ENCODE measurements at regions of chr20 and their contacts with region 1.

Region 1: GRCh38 chr20:53773792-53774401 is 180.3 kb upstream of the ZNF217 start:
- DNase-seq: no peak
- ATAC-seq: peak; percentile 93
- H3K4me3 Mint-ChIP-seq: no peak overlapping the region
- H3K27ac Mint-ChIP-seq: peak overlapping the region; percentile 14
- H3K4me1 Mint-ChIP-seq: peaks cover 15% of the 10 kb centered on the region
- H3K27me3 Mint-ChIP-seq: no peaks in the 10 kb centered on the region

Region 2: DNA sequence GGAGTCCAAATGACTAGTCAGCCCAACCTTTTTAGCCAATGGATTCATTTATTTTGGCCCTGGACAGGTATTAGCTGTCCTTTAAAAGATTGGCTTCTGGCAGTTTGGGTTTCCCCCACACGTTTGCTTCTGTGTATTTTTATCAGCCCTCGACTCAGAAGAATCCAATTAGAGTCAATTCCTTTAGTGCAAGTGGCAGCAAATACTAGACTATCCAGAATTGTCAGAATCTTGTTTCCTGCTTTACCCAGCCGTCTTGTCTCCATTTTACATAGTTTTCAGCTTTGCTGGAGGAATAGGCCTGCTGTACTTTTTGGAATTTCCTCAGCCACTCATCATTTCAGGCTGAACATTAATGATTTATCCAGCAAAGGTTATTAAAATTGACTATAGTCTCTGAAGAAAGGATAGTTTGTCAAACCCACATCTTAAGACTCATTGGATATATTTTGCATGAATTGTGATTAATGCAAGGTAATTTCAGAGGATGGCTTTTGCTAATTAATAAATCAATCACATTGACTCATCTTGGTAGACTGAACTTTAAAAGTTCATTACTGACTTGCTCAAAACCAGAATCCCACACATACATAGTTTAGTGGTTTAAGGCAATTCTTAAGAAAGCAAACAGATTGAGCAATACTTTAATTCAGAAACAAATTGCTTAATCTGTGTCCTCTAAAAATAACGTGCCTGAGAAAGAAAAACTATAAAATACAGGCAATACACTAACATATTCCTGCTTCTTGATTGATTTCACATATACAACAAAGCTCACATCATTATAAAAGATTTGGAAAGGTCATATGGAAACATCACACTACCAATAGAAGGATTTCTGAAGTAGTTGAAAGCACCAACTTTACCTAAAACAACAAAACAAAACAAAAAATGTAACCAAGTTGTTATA is 117.3 kb before region 1 on chr20:
- CTCF ChIA-PET with region 1: no interaction called
- POLR2A ChIA-PET with region 1: no interaction called
- intact Hi-C with region 1: no loop called
- DNase-seq: no peak
- ATAC-seq: peak; percentile 38
- H3K4me3 Mint-ChIP-seq: no peak overlapping the region
- H3K27ac Mint-ChIP-seq: peak overlapping the region; percentile 73
- H3K4me1 Mint-ChIP-seq: peaks cover 80% of the 10 kb centered on the region
- H3K27me3 Mint-ChIP-seq: no peaks in the 10 kb centered on the region

Region 3: GRCh38 chr20:53809728-53810365 is 36.0 kb after region 1 on chr20:
- CTCF ChIA-PET with region 1: no interaction called
- POLR2A ChIA-PET with region 1: interaction called, 10 read pairs
- intact Hi-C with region 1: no loop called
- DNase-seq: no peak
- ATAC-seq: no peak
- H3K4me3 Mint-ChIP-seq: no peak overlapping the region
- H3K27ac Mint-ChIP-seq: no peak overlapping the region
- H3K4me1 Mint-ChIP-seq: peaks cover 4% of the 10 kb centered on the region
- H3K27me3 Mint-ChIP-seq: no peaks in the 10 kb centered on the region

Region 4: GRCh38 chr20:53857723-53858236 is 83.9 kb after region 1 on chr20:
- CTCF ChIA-PET with region 1: interaction called, 3 read pairs
- POLR2A ChIA-PET with region 1: interaction called, 17 read pairs
- intact Hi-C with region 1: no loop called
- DNase-seq: no peak
- ATAC-seq: no peak
- H3K4me3 Mint-ChIP-seq: no peak overlapping the region
- H3K27ac Mint-ChIP-seq: no peak overlapping the region
- H3K4me1 Mint-ChIP-seq: peaks cover 21% of the 10 kb centered on the region
- H3K27me3 Mint-ChIP-seq: no peaks in the 10 kb centered on the region